ENCODE measurements at regions of chr4 and their contacts with region 1.

Region 1: GRCh38 chr4:165112368-165113139 is at the start of gene TMEM192:
- DNase-seq: peak; percentile 93
- ATAC-seq: peak; percentile 98
- H3K4me3 Mint-ChIP-seq: peak within 1 kb of the TSS; percentile 93
- H3K27ac Mint-ChIP-seq: peak within 1 kb of the TSS; percentile 93
- H3K4me1 Mint-ChIP-seq: peaks cover 20% of the 10 kb centered on the region
- H3K27me3 Mint-ChIP-seq: peaks cover 4% of the 10 kb centered on the region
- total RNA-seq, gene TMEM192: 6.7 to 8.4 TPM

Region 2: DNA sequence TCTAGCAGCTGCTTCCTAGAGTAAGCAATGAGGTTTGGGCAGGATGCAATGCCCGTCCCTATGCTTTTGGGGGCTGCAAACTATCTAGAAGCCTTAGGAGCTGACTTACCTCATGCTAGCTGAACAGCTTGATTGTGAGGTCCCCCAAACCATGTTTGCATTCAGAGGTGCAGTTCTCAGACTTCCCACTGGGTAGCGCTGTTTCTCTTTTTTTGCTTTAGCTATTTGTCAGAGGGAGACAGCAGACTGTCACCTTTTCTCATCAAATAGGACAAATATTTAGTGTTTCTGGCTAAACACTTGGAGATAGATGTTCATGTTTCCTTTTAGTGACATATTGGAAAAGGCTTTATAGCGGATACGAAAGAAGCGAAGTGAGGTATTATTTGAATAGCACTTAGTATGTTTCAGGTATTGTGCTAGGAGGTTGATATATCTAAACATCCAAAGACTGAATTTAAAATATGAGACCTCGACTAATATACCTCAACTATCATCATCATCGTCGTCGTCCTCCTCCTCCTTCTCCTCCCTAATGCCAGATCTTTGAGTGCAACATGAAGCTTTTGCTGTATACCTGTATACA is 18.8 kb after region 1 on chr4:
- CTCF ChIA-PET with region 1: interaction called, 39 read pairs
- POLR2A ChIA-PET with region 1: no interaction called
- DNase-seq: peak; percentile 88
- ATAC-seq: peak; percentile 83
- H3K4me3 Mint-ChIP-seq: no peak overlapping the region
- H3K27ac Mint-ChIP-seq: no peak overlapping the region
- H3K4me1 Mint-ChIP-seq: peaks cover 24% of the 10 kb centered on the region
- H3K27me3 Mint-ChIP-seq: peaks cover 11% of the 10 kb centered on the region

Region 3: DNA sequence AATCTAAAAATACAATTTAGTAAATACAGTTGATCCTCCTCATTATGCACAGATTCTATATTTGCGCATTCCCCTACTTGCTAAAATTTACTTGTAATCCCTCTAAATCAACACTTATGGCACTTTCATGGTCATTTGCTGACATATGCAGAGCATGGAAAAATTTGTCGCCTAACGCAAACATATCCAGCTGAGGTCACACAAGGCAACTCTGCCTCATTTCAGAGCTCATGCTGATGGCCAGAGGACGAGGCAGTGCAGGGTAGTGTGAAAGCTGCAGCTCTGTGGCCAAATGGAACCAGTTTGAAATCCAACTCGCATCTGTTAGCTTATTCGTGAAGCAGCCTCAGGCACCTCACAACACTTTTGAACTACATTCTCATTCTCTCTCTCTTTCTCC is 55.1 kb after region 1 on chr4:
- CTCF ChIA-PET with region 1: no interaction called
- POLR2A ChIA-PET with region 1: no interaction called
- DNase-seq: no peak
- ATAC-seq: no peak
- H3K4me3 Mint-ChIP-seq: no peak overlapping the region
- H3K27ac Mint-ChIP-seq: no peak overlapping the region
- H3K4me1 Mint-ChIP-seq: no peaks in the 10 kb centered on the region
- H3K27me3 Mint-ChIP-seq: peaks cover 5% of the 10 kb centered on the region

Region 4: DNA sequence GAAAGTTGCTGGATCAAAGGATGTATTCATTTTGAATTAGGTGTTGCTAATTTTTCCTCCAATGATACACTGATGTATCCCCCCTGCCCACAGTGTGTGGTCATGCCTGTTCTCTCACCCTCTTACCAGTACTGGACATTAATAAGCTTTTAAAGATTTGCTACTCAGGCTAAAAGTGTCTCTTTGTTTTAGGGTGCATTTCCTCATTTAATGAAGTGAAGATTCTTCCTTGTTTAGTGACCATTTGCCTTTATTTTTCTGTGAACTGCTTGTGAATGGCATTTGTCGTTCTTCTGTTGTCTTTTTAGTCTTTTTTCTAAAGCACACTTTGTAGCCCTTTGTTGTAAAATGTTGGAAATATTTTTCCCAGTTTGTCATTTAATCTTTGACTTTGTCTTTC is 219.9 kb after region 1 on chr4:
- CTCF ChIA-PET with region 1: interaction called, 13 read pairs
- POLR2A ChIA-PET with region 1: no interaction called
- DNase-seq: no peak
- ATAC-seq: no peak
- H3K4me3 Mint-ChIP-seq: no peak overlapping the region
- H3K27ac Mint-ChIP-seq: no peak overlapping the region
- H3K4me1 Mint-ChIP-seq: peaks cover 44% of the 10 kb centered on the region
- H3K27me3 Mint-ChIP-seq: no peaks in the 10 kb centered on the region

Region 5: GRCh38 chr4:165378745-165379677 is 266.5 kb after region 1 on chr4 and contains the start of gene CPE:
- CTCF ChIA-PET with region 1: interaction called, 14 read pairs
- POLR2A ChIA-PET with region 1: no interaction called
- DNase-seq: peak; percentile 67
- ATAC-seq: peak; percentile 96
- H3K4me3 Mint-ChIP-seq: peak within 1 kb of the TSS; percentile 55
- H3K27ac Mint-ChIP-seq: no peak within 1 kb of the TSS
- H3K4me1 Mint-ChIP-seq: peaks cover 13% of the 10 kb centered on the region
- H3K27me3 Mint-ChIP-seq: peaks cover 56% of the 10 kb centered on the region
- total RNA-seq, gene CPE: not detected